Endothelial cell of umbilical vein (primary cell): ENCODE measurements at regions of chr7 and their contacts with region 1.

Region 1: DNA sequence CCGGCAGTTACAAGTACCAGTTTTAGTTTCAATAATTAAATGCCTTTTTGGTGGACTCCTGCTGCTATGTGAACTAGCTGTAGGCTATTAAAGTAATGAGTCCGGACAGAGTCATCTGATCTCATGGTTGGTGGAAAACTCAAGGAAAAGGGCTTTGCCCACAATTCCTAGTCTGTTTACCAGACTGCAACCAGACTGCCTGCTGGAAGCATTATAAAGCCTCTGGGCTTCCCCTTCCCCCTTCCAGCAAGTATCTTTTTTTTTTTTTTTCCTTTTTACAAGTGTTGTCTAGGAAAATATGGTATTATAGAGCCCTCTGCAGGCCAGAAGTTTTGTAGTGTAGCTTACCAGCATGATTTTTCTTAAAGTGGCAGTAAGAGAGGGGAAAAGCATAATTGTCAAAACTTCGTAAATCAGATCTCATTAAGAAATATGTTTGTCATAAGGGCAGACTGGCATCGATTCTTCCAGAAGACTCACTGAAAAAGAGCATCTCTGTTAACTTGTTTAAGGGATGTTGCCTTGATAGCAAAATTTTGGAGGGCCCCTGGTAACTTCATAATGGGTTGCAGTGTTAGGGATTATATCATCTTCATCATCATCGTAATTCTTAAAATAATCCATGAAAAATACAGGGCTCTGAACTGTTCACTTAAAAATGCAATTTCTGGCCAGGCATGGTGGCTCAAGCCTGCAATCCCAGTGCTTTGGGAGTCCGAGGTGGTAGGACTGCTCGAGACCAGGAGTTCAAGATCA is 181.3 kb downstream of the TAX1BP1 start:
- DNase-seq: peak; percentile 94
- H3K4me3 ChIP-seq: no peak overlapping the region
- H3K27ac ChIP-seq: no peak overlapping the region
- H3K4me1 ChIP-seq: peaks cover 37% of the 10 kb centered on the region
- H3K27me3 ChIP-seq: no peaks in the 10 kb centered on the region
- CTCF ChIP-seq: peak; percentile 42 to 45
- POLR2A ChIP-seq: no peak

Region 2: DNA sequence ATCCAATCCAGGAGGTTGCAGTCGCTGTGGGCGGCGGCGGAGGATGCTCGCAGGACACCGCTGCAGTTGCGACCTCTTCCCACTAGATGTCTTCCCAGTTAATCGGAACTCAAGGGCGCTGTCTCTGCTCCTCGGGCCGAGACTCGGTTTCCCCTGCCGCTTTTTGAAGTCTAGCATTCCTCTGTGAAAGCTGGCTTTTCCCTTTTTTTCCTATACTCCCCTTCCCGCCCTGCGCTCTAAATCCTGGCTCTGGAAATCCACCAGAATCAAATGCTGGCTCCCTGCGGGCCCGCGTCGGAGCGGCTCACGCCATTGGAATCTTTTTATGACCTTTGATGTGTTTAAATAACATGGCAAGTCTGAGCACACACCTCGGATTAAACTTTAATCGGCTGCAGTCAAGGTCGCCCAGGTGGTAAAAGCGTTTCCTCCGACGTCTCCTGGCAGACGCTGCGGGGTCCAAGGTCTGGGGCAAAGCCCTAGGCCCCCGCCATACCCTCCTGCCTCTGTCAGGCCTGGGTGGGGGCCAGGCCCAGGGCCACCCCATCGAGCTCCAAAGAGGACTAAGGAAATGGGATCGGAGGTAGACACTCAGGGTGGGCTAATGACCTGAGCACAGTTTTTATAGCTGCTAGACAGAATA is 710.7 kb before region 1 on chr7:
- CTCF ChIA-PET with region 1: interaction called, 30 read pairs
- POLR2A ChIA-PET with region 1: no interaction called
- dilution Hi-C with region 1: no loop called
- intact Hi-C with region 1: loop called (anchors 1 kb)
- DNase-seq: no peak
- H3K4me3 ChIP-seq: peak overlapping the region in 1 of 3 experiments; percentile 29
- H3K27ac ChIP-seq: no peak overlapping the region
- H3K4me1 ChIP-seq: peaks cover 15% of the 10 kb centered on the region
- H3K27me3 ChIP-seq: peaks cover 73 to 77% of the 10 kb centered on the region in 2 experiments
- CTCF ChIP-seq: peak; percentile 56 to 82
- POLR2A ChIP-seq: no peak

Region 3: DNA sequence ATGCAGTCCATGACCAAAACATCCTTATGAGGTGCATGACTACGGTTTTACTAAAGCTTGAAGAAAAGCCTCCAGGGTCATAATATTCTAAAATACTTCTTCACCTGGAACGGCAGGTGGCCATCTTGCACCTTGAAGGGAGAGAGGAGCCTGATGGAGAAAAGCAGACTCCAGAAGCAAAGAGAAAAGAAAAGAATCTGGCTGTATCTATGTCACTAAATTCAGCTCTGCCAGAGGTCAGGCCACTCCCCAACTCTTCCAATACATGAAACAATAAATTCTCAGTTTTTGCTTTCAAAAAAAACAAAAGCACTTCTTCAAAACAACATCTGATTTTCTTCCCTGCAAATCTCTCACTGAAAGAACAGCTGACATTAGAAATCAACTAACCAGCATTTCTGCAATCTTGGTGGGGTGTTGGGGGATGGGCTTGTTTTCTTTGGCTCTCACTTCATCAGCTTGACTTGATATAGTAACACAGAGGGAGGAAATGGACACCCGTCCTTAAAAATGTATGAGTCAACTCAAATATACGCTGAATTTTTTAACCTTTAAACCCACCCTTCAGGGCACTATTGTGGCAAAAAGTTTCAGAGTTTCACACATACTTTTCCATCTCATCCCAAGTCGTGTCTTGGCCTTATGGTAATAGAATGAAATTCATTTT is 280.2 kb before region 1 on chr7:
- CTCF ChIA-PET with region 1: interaction called, 4 read pairs
- POLR2A ChIA-PET with region 1: no interaction called
- dilution Hi-C with region 1: no loop called
- intact Hi-C with region 1: loop called (anchors 1 kb)
- DNase-seq: peak; percentile 96
- H3K4me3 ChIP-seq: peak overlapping the region in 1 of 3 experiments; percentile 36
- H3K27ac ChIP-seq: peak overlapping the region; percentile 85
- H3K4me1 ChIP-seq: peaks cover 18% of the 10 kb centered on the region
- H3K27me3 ChIP-seq: no peaks in the 10 kb centered on the region
- CTCF ChIP-seq: no peak
- POLR2A ChIP-seq: no peak

Region 4: GRCh38 chr7:27774717-27775328 is 146.4 kb before region 1 on chr7:
- CTCF ChIA-PET with region 1: interaction called, 42 read pairs
- POLR2A ChIA-PET with region 1: no interaction called
- dilution Hi-C with region 1: no loop called
- intact Hi-C with region 1: loop called (anchors 1 kb)
- DNase-seq: peak; percentile 59
- H3K4me3 ChIP-seq: no peak overlapping the region
- H3K27ac ChIP-seq: no peak overlapping the region
- H3K4me1 ChIP-seq: no peaks in the 10 kb centered on the region
- H3K27me3 ChIP-seq: no peaks in the 10 kb centered on the region
- CTCF ChIP-seq: peak; percentile 45 to 46
- POLR2A ChIP-seq: no peak

Region 5: GRCh38 chr7:27873981-27874957 is 47.0 kb before region 1 on chr7:
- CTCF ChIA-PET with region 1: interaction called, 4 read pairs
- POLR2A ChIA-PET with region 1: no interaction called
- dilution Hi-C with region 1: no loop called
- intact Hi-C with region 1: loop called (anchors 1 kb)
- DNase-seq: peak; percentile 98
- H3K4me3 ChIP-seq: peak overlapping the region in 1 of 3 experiments; percentile 10
- H3K27ac ChIP-seq: peak overlapping the region; percentile 95
- H3K4me1 ChIP-seq: peaks cover 34% of the 10 kb centered on the region
- H3K27me3 ChIP-seq: no peaks in the 10 kb centered on the region
- CTCF ChIP-seq: no peak
- POLR2A ChIP-seq: peak; percentile 56

Region 6: DNA sequence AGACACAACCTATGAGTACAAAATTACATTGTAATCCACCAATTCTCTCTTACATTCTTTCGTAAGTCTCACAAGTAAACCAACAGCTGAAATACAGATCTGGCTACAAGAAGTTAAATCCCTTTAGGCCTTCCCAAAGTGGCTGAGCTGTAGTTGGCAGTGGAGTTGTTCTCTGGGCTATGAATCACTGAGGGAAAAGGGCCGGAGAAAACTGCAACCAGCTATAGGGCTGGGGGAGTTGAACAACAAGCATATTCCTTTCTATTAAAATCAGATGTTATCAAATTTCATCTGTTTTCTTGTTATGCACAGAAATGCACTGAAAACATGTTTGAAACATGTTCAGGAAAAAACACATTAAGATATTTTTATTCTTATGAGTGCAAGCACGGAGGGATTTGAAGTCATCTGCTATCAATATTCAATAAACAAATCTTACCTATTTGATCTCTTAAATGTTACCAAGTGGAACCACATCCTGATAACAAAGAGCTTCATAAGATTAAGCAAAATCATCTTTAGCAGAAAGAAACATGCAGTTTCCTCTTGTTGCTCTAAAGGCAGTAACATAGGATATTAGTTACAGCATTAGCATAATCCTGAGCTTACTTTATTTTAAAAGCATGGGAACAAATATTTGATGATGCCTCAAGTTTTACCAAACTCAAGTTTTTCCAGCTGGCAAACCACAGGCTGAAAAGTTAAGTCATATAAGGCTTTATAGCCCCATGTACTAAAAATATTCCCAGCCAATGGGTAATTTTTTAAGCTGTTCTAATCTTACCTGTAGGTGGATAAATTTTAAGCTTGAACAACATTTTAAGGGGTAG is 31.4 kb after region 1 on chr7:
- CTCF ChIA-PET with region 1: no interaction called
- POLR2A ChIA-PET with region 1: no interaction called
- dilution Hi-C with region 1: no loop called
- intact Hi-C with region 1: no loop called
- DNase-seq: no peak
- H3K4me3 ChIP-seq: no peak overlapping the region
- H3K27ac ChIP-seq: no peak overlapping the region
- H3K4me1 ChIP-seq: no peaks in the 10 kb centered on the region
- H3K27me3 ChIP-seq: no peaks in the 10 kb centered on the region
- CTCF ChIP-seq: no peak
- POLR2A ChIP-seq: no peak

Region 7: GRCh38 chr7:28078036-28078901 is 157.0 kb after region 1 on chr7:
- CTCF ChIA-PET with region 1: interaction called, 5 read pairs
- POLR2A ChIA-PET with region 1: no interaction called
- dilution Hi-C with region 1: no loop called
- intact Hi-C with region 1: loop called (anchors 5 kb)
- DNase-seq: peak; percentile 49
- H3K4me3 ChIP-seq: no peak overlapping the region
- H3K27ac ChIP-seq: no peak overlapping the region
- H3K4me1 ChIP-seq: peaks cover 7% of the 10 kb centered on the region
- H3K27me3 ChIP-seq: no peaks in the 10 kb centered on the region
- CTCF ChIP-seq: peak; percentile 90 to 98
- POLR2A ChIP-seq: no peak